CD8-positive, alpha-beta memory T cell (primary cell): ENCODE measurements at regions of chr19 and their contacts with region 1.

Region 1: GRCh38 chr19:14347999-14348889 is 33.0 kb upstream of the ADGRE5 start:
- DNase-seq: peak; percentile 52 to 75 (median 56)
- H3K4me3 ChIP-seq: peak overlapping the region; percentile 45
- H3K4me3 Mint-ChIP-seq: peak overlapping the region in 5 of 7 donors; percentile 28 to 73 (median 47)
- H3K27ac ChIP-seq: no peak overlapping the region
- H3K27ac Mint-ChIP-seq: peak overlapping the region in 4 of 8 donors; percentile 42 to 65 (median 50)
- H3K4me1 ChIP-seq: peaks cover 24% of the 10 kb centered on the region
- H3K4me1 Mint-ChIP-seq: peaks cover 11 to 24% (median 18%) of the 10 kb centered on the region in 3 donors
- H3K27me3 ChIP-seq: no peaks in the 10 kb centered on the region
- H3K27me3 Mint-ChIP-seq: no peaks in the 10 kb centered on the region

Region 2: DNA sequence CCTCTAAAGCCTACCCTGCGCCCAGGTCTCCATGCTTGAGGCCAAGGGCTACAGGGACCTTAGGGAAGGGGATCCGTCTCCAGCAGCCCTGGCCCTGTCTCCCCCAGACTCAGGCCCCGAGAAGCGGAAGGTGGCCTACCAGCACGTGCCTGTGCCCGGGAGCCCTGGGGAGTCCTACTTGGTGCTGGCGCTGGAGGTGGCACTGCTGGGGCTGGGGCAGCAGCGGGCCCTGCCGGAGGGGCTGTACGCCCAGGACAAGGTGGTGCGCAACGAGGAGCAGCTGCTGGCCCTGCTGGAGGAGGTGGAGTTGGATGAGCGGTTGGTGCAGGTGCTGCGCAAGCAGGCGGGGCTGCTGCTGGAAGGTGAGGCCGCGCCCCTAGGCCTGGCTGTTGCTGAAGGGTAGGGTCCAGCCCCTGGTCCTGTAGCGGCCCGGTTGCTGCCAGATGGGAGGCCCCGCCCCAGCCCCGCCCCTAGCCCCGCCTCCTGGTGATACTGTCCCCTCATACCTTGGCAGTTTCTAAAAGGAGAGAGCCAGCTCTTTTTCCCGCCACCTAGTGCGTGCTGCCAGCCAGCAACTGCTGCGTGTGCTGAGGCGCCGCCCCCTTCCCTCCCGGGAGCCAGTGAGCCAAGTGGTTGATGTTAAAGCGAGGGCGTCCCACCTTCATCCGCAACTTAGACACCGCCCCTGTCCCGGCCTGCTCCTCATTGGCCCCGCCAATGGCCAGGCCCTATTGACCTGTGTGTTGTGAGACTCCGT is 530.5 kb before region 1 on chr19:
- CTCF ChIA-PET with region 1: no interaction called
- POLR2A ChIA-PET with region 1: no interaction called
- DNase-seq: peak in 1 of 5 donors; percentile 39
- H3K4me3 ChIP-seq: no peak overlapping the region
- H3K4me3 Mint-ChIP-seq: peak overlapping the region in 4 of 7 donors; percentile 23 to 47 (median 23)
- H3K27ac ChIP-seq: peak overlapping the region; percentile 54
- H3K27ac Mint-ChIP-seq: peak overlapping the region in 2 of 8 donors; percentile 58 to 69
- H3K4me1 ChIP-seq: no peaks in the 10 kb centered on the region
- H3K4me1 Mint-ChIP-seq: peaks cover 3 to 9% (median 5%) of the 10 kb centered on the region in 3 donors
- H3K27me3 ChIP-seq: no peaks in the 10 kb centered on the region
- H3K27me3 Mint-ChIP-seq: no peaks in the 10 kb centered on the region

Region 3: GRCh38 chr19:14147797-14148605 is 200.2 kb before region 1 on chr19:
- CTCF ChIA-PET with region 1: interaction called, 11 read pairs
- POLR2A ChIA-PET with region 1: no interaction called
- DNase-seq: peak in 4 of 5 donors; percentile 30 to 56 (median 44)
- H3K4me3 ChIP-seq: no peak overlapping the region
- H3K4me3 Mint-ChIP-seq: peak overlapping the region in 6 of 7 donors; percentile 25 to 89 (median 48)
- H3K27ac ChIP-seq: peak overlapping the region; percentile 35
- H3K27ac Mint-ChIP-seq: peak overlapping the region; percentile 85 to 99 (median 97)
- H3K4me1 ChIP-seq: peaks cover 31% of the 10 kb centered on the region
- H3K4me1 Mint-ChIP-seq: peaks cover 21 to 36% (median 35%) of the 10 kb centered on the region in 3 donors
- H3K27me3 ChIP-seq: no peaks in the 10 kb centered on the region
- H3K27me3 Mint-ChIP-seq: no peaks in the 10 kb centered on the region

Region 4: DNA sequence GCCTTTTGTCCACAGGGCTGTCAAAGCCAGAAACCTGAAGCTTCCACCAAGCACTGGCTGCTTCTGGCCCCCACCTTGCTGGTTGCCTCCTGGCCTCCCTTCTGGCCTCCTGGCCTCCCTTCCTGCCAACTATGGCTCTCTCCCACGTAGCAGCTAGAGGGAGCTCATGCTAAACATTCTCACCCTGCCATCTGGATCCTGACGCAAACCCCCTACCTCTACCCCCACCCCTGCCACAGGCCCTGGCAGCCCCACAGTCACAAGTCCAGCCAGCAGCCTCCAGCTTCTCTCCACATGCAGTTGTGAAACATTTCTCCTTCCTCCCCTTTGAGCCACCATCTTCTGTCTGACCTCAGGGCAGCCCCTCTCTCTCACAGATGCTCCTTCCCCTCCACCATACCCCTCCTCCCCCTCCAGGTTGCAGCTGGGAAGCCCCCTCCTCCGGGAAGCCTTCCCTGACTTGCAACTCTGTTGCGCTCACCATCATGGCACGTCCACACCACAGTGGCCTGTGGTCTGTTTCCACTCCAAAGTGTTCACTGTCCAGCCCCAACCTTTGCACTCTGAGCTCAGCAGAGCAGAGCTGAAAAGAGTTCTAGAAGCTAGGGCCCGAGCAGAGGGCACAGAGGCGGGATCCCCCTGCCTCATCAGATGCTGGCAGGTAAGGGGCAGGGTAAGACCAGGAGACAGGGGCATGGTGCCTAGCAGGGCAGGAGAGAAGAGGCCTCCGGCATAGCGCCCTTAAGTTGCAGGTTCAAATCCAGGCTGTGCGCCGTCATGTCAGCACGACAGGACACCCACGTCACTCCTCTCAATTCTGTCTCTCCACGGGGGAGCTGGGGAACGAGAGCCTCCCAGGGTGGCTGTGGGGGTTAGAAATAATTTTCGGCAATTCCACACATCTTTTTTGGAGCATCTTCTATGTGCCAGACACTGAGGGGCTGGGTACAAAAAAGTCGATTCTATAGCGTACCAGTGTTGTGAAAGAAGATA is 149.6 kb before region 1 on chr19:
- CTCF ChIA-PET with region 1: interaction called, 13 read pairs
- POLR2A ChIA-PET with region 1: no interaction called
- DNase-seq: no peak
- H3K4me3 ChIP-seq: no peak overlapping the region
- H3K4me3 Mint-ChIP-seq: peak overlapping the region in 1 of 7 donors; percentile 34
- H3K27ac ChIP-seq: no peak overlapping the region
- H3K27ac Mint-ChIP-seq: no peak overlapping the region
- H3K4me1 ChIP-seq: no peaks in the 10 kb centered on the region
- H3K4me1 Mint-ChIP-seq: peaks cover 21 to 37% (median 23%) of the 10 kb centered on the region in 3 donors
- H3K27me3 ChIP-seq: no peaks in the 10 kb centered on the region
- H3K27me3 Mint-ChIP-seq: peaks cover 0 to 3% of the 10 kb centered on the region in 2 donors

Region 5: GRCh38 chr19:14222886-14223285 is 125.4 kb before region 1 on chr19:
- CTCF ChIA-PET with region 1: interaction called, 13 read pairs
- POLR2A ChIA-PET with region 1: no interaction called
- DNase-seq: no peak
- H3K4me3 ChIP-seq: no peak overlapping the region
- H3K4me3 Mint-ChIP-seq: no peak overlapping the region
- H3K27ac ChIP-seq: no peak overlapping the region
- H3K27ac Mint-ChIP-seq: no peak overlapping the region
- H3K4me1 ChIP-seq: no peaks in the 10 kb centered on the region
- H3K4me1 Mint-ChIP-seq: peaks cover 6 to 11% (median 10%) of the 10 kb centered on the region in 3 donors
- H3K27me3 ChIP-seq: no peaks in the 10 kb centered on the region
- H3K27me3 Mint-ChIP-seq: peaks cover 0 to 2% of the 10 kb centered on the region in 2 donors

Region 6: DNA sequence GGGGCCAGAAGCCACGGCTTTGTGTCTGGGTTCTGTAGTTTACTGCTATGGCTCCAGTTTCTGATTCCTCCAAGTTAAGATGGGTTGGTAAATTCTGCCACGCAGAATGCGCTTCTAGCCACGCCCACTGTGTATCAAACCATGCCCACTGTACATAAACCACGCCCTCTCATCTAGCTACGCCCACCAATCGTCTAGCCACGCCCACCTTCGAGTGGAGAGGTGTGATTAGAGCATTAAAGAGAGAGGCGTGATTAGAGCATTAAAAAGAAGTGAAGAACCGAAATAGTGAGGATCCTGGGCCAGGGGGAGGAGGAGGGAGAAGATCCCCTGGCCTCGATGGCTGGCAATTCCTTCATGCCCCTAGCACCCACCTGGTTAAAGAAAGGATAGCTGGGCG is 10.7 kb before region 1 on chr19:
- CTCF ChIA-PET with region 1: interaction called, 15 read pairs
- POLR2A ChIA-PET with region 1: no interaction called
- DNase-seq: peak in 4 of 5 donors; percentile 18 to 53 (median 30)
- H3K4me3 ChIP-seq: no peak overlapping the region
- H3K4me3 Mint-ChIP-seq: peak overlapping the region in 1 of 7 donors; percentile 34
- H3K27ac ChIP-seq: no peak overlapping the region
- H3K27ac Mint-ChIP-seq: peak overlapping the region in 2 of 8 donors; percentile 26 to 70
- H3K4me1 ChIP-seq: peaks cover 5% of the 10 kb centered on the region
- H3K4me1 Mint-ChIP-seq: peaks cover 4 to 7% (median 4%) of the 10 kb centered on the region in 3 donors
- H3K27me3 ChIP-seq: no peaks in the 10 kb centered on the region
- H3K27me3 Mint-ChIP-seq: peaks cover 0 to 4% of the 10 kb centered on the region in 2 donors

Region 7: GRCh38 chr19:14366498-14366915 is 18.3 kb after region 1 on chr19:
- CTCF ChIA-PET with region 1: interaction called, 26 read pairs
- POLR2A ChIA-PET with region 1: no interaction called
- DNase-seq: peak; percentile 76 to 96 (median 92)
- H3K4me3 ChIP-seq: peak overlapping the region; percentile 46
- H3K4me3 Mint-ChIP-seq: peak overlapping the region; percentile 47 to 80 (median 70)
- H3K27ac ChIP-seq: peak overlapping the region; percentile 68
- H3K27ac Mint-ChIP-seq: peak overlapping the region; percentile 85 to 100 (median 100)
- H3K4me1 ChIP-seq: peaks cover 88% of the 10 kb centered on the region
- H3K4me1 Mint-ChIP-seq: peaks cover 60 to 79% (median 73%) of the 10 kb centered on the region in 3 donors
- H3K27me3 ChIP-seq: no peaks in the 10 kb centered on the region
- H3K27me3 Mint-ChIP-seq: peaks cover 0 to 13% of the 10 kb centered on the region in 2 donors

Region 8: GRCh38 chr19:14405758-14406644 is 57.8 kb after region 1 on chr19:
- CTCF ChIA-PET with region 1: interaction called, 37 read pairs
- POLR2A ChIA-PET with region 1: no interaction called
- DNase-seq: peak; percentile 86 to 91 (median 88)
- H3K4me3 ChIP-seq: no peak overlapping the region
- H3K4me3 Mint-ChIP-seq: peak overlapping the region in 3 of 7 donors; percentile 19 to 83 (median 77)
- H3K27ac ChIP-seq: no peak overlapping the region
- H3K27ac Mint-ChIP-seq: peak overlapping the region in 7 of 8 donors; percentile 59 to 97 (median 87)
- H3K4me1 ChIP-seq: peaks cover 40% of the 10 kb centered on the region
- H3K4me1 Mint-ChIP-seq: peaks cover 11 to 55% (median 26%) of the 10 kb centered on the region in 3 donors
- H3K27me3 ChIP-seq: no peaks in the 10 kb centered on the region
- H3K27me3 Mint-ChIP-seq: peaks cover 0 to 13% of the 10 kb centered on the region in 2 donors